ENCODE measurements at regions of chr19 and their contacts with region 1.

Region 1: GRCh38 chr19:46990991-46991676 is 28.5 kb upstream of the NPAS1 start:
- DNase-seq: peak; percentile 78 to 91
- H3K4me3 ChIP-seq: no peak overlapping the region
- H3K27ac ChIP-seq: no peak overlapping the region
- H3K4me1 ChIP-seq: peaks cover 0 to 4% (median under 1%) of the 10 kb centered on the region in 4 experiments; a peak in 2 of 7 replicates
- H3K27me3 ChIP-seq: no peaks in the 10 kb centered on the region
- CTCF ChIP-seq: peak; percentile 77 to 96 (median 90)
- EP300 ChIP-seq: 0 out of 3 replicates have a peak, but pooled peaks of 1 of the 2 experiments have one; percentile 39
- POLR2A ChIP-seq: no peak
- RAD21 ChIP-seq: peak; percentile 91 to 92

Region 2: DNA sequence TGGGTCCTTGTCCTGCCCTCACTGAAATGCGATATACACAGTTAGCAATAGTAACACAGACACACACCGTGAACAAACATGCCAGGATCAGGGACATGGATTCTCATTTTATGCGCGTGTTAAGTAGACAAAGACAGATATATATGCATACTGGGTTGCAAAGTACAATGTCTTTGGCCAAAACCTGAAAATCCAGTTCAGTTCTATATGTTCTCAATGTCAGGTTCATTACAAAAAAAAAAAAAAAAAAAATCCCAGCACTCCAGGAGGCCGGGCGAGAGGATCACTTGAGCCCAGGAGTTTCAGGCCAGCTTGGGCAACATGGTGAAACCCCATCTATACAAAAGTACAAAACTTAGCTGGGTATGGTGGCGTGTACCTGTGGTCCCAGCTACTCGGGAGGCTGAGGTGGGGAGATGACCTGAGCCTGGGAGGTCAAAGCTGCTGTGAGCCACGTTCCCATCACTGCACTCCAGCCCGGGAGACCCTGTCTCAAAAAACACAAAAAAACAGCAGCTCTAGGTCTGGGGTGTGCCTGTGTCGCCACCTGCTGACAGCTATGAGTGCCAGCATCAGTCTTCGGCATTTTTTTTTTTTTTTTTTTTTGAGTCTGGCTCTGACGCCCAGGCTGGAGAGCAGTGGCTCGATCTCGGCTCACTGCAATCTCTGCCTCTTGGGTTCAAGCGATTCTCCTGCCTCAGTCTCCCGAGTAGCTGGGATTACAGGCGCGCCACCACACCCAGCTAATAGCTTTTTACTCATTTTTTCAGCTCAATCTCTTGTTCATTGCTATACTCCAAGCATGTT is 150.8 kb before region 1 on chr19:
- CTCF ChIA-PET with region 1: interaction called, 17 read pairs
- POLR2A ChIA-PET with region 1: no interaction called
- DNase-seq: peak in 1 of 2 experiments; percentile 60
- H3K4me3 ChIP-seq: no peak overlapping the region
- H3K27ac ChIP-seq: 0 out of 2 replicates have a peak overlapping the region, but pooled peaks have one; percentile 44
- H3K4me1 ChIP-seq: no peaks in the 10 kb centered on the region
- H3K27me3 ChIP-seq: no peaks in the 10 kb centered on the region
- CTCF ChIP-seq: peak; percentile 78 to 93 (median 85)
- EP300 ChIP-seq: no peak
- POLR2A ChIP-seq: no peak
- RAD21 ChIP-seq: peak; percentile 88 to 90

Region 3: DNA sequence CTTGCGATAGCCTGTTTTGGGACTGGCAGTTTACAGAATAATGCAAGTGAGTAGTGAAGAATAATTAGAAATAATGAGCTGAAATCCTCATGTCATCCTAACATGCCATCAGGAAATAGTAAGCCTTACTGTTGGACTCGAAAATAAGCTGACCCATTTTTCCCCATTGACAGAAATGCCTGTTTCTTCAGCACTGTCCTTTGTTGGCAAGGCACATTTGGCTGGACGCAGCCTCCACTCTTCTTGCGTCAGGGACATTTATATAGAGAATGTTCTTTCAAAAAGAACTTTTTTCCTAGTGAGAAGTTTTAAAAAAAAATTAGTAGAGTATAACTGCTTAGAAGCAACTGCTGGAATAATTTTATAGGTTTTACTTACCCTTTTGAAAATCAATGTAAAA is 83.3 kb before region 1 on chr19:
- CTCF ChIA-PET with region 1: interaction called, 16 read pairs
- POLR2A ChIA-PET with region 1: interaction called, 5 read pairs
- DNase-seq: no peak
- H3K4me3 ChIP-seq: no peak overlapping the region
- H3K27ac ChIP-seq: no peak overlapping the region
- H3K4me1 ChIP-seq: peaks cover 0 to 10% (median 3%) of the 10 kb centered on the region in 4 experiments; a peak in 2 of 7 replicates
- H3K27me3 ChIP-seq: no peaks in the 10 kb centered on the region
- CTCF ChIP-seq: no peak
- EP300 ChIP-seq: no peak
- POLR2A ChIP-seq: no peak
- RAD21 ChIP-seq: no peak

Region 4: GRCh38 chr19:46935066-46935663 is 56.0 kb before region 1 on chr19:
- CTCF ChIA-PET with region 1: interaction called, 47 read pairs
- POLR2A ChIA-PET with region 1: no interaction called
- DNase-seq: no peak
- H3K4me3 ChIP-seq: no peak overlapping the region
- H3K27ac ChIP-seq: no peak overlapping the region
- H3K4me1 ChIP-seq: no peaks in the 10 kb centered on the region
- H3K27me3 ChIP-seq: no peaks in the 10 kb centered on the region
- CTCF ChIP-seq: no peak
- EP300 ChIP-seq: no peak
- POLR2A ChIP-seq: no peak
- RAD21 ChIP-seq: no peak

Region 5: DNA sequence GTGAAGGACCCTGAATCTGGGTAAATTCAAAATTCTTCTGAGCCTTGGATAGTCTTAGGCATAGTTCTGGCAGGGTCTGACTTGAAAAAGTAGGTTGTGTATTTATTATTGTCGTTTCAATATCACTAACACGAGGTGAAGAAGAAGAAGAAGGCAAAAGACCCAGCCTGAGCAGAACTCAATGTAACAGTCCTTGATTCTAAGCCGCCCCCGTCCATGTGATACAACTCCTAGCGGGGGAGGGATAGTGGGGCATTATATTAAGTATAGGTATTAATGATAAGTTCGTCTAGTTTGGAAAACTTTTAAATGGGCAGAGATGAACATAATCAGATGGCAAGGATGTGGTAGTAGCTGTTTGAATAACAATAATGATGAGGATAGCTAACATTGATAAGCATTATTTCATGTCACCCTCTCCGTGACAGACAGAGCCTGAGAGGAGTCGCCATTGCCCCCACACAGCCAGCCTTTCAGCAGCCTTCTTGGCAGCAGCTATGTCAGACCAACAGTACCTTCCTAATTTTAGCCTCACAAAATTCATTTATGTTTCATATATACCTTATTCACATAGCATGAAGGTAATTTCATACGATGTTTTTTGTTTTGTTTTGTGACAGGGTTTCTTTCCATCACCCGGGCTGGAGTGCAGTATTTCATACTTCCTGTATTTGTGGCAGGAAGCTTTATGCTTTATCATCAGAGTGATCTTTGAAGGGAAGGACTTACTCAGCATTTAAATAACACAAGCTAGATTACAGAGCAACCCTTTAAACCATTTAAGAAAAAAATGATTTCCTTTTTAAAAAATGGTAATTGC is 35.9 kb before region 1 on chr19:
- CTCF ChIA-PET with region 1: interaction called, 13 read pairs
- POLR2A ChIA-PET with region 1: no interaction called
- DNase-seq: no peak
- H3K4me3 ChIP-seq: no peak overlapping the region
- H3K27ac ChIP-seq: no peak overlapping the region
- H3K4me1 ChIP-seq: peaks cover 0 to 4% (median 0%) of the 10 kb centered on the region in 4 experiments; a peak in 1 of 7 replicates
- H3K27me3 ChIP-seq: no peaks in the 10 kb centered on the region
- CTCF ChIP-seq: no peak
- EP300 ChIP-seq: no peak
- POLR2A ChIP-seq: no peak
- RAD21 ChIP-seq: no peak

Region 6: DNA sequence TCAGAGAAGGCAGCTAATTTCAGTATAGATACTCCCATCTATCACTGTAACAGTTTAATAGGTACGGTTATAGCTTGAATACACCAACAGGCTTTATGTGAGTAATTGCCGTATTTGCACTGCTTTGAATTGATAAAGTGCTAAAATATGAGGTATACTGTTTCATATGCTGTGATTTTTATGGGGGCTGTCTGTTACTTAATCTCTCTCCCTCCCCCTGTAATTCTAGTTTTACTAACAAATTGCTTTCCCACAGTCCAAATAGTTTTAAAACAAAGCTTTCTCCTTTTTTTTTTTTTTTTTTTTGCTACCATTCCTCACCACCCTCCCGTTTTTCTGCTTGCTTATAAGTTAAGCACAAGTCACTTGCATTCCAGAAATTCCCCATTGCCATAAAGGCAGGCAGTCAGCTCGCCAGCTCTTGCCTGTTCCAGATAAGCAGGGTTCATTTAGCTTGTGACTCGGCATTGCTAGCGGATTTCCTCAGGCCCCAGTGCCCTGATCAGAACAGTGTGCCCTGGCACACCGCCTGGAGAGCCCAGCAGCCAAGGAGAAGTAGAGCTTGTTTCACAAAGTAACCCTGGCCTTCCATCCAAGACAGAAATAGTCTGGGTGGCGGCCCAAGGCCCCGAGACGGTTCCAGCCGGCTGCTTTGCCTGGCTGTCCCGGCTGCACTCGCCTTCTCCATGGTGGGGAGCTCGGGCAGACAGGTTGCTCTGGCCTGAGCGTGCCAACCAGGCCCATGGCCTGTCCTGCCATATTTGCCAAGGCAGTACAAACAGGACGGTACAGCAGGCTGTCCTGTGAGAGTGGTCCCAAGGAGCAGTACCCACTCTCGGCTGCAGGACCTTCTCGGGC is 15.0 kb before region 1 on chr19:
- CTCF ChIA-PET with region 1: interaction called, 50 read pairs
- POLR2A ChIA-PET with region 1: interaction called, 4 read pairs
- DNase-seq: peak; percentile 59 to 62
- H3K4me3 ChIP-seq: no peak overlapping the region; a peak in 1 of 8 replicates
- H3K27ac ChIP-seq: peak overlapping the region; percentile 71
- H3K4me1 ChIP-seq: peaks cover 14 to 24% (median 20%) of the 10 kb centered on the region in 4 experiments
- H3K27me3 ChIP-seq: no peaks in the 10 kb centered on the region
- CTCF ChIP-seq: no peak
- EP300 ChIP-seq: no peak
- POLR2A ChIP-seq: no peak
- RAD21 ChIP-seq: no peak

Region 7: GRCh38 chr19:47013041-47013517 is 21.9 kb after region 1 on chr19:
- CTCF ChIA-PET with region 1: interaction called, 32 read pairs
- POLR2A ChIA-PET with region 1: no interaction called
- DNase-seq: peak; percentile 49 to 97
- H3K4me3 ChIP-seq: no peak overlapping the region
- H3K27ac ChIP-seq: no peak overlapping the region
- H3K4me1 ChIP-seq: peaks cover 0 to 3% (median 0%) of the 10 kb centered on the region in 4 experiments; a peak in 1 of 7 replicates
- H3K27me3 ChIP-seq: no peaks in the 10 kb centered on the region
- CTCF ChIP-seq: peak; percentile 92 to 98 (median 95)
- EP300 ChIP-seq: no peak; a peak in 1 of 3 replicates
- POLR2A ChIP-seq: no peak
- RAD21 ChIP-seq: peak; percentile 94 to 98